Natural killer cell (primary cell): ENCODE measurements at regions of chr14 and their contacts with region 1.

Region 1: DNA sequence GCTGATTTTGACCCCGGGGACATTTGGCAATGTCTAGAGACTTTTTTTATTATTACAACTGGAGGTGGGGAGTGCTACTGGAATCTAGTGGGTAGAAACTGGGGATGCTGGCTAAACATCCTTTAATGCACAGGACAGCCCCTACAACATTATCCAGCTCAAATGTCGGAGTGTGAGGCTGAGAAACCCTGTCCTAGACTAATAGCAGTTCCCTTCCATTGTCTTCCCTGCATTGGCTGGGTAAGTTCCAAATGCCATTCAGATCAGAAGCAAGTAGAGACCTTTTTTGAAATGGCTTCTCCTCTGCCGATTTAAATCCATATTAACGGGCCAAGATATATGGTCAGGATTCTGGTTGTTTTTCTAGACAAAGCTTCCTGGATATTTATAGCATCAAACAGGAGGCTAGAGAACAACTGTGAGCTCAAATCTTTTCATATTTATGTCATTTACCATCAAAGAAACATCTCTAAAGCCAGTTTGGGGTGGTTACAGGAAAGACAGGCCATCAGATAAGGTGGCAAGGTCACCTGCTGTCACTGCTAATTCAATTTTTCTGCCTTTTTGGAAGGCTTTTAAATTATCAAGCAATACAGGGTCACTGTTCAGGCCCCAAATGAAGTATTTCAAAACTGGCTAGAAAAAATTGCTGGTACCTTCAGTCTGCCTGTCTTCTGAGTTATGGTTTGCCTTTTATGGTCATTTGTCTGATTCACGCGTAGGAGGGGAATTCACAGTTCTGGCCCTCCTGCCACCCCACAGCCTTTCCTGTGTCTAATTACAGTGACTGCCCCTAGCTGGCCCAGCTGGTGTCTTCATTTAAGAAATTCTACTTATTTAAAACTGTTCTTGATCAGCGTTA is 20.1 kb upstream of the AKAP5 start:
- DNase-seq: peak; percentile 55 to 76
- ATAC-seq: peak; percentile 90 to 96 (median 95)
- H3K4me3 ChIP-seq: no peak overlapping the region
- H3K4me3 Mint-ChIP-seq: peak overlapping the region; percentile 58
- H3K27ac ChIP-seq: peak overlapping the region; percentile 93
- H3K27ac Mint-ChIP-seq: peak overlapping the region; percentile 89 to 99
- H3K4me1 ChIP-seq: peaks cover 60% of the 10 kb centered on the region
- H3K4me1 Mint-ChIP-seq: peaks cover 53 to 54% of the 10 kb centered on the region in 2 donors
- H3K27me3 ChIP-seq: no peaks in the 10 kb centered on the region
- H3K27me3 Mint-ChIP-seq: no peaks in the 10 kb centered on the region
- CTCF ChIP-seq: no peak

Region 2: DNA sequence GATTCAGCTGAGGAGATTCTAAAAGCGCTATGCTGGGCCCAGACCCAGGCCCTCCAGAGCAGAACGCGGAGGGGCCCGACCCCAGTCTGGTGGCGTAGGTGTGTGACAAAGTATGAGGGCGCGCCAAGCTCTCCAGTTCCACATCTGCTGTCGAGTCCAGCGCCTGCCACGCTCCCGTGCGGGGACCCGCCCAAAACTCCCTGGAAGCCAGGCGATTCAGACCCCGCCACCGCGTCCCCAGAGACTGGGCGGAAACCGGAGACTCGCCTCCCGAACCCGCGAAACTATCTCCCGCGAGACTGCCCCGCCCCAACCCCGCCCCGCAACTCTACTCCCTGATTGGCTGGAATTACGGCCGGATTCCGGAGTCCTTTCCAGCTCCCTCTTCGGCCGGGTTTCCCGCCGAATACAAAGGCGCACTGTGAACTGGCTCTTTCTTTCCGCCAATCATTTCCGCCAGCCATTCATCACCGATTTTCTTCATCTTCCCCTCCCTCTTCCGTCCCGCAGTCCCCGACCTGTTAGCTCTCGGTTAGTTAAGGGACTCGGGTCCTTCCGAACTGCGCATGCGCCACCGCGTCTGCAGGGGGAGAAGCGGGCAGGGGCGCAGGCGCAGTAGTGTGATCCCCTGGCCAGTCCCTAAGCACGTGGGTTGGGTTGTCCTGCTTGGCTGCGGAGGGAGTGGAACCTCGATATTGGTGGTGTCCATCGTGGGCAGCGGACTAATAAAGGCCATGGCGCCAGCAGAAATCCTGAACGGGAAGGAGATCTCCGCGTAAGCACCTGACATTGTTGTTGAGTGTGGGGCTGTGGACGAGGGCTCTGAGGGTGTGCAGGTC is 57.3 kb before region 1 on chr14 and contains the start of gene MTHFD1:
- intact Hi-C with region 1: loop called (anchors 5 kb)
- DNase-seq: peak; percentile 92 to 99
- ATAC-seq: peak; percentile 86 to 90 (median 88)
- H3K4me3 ChIP-seq: peak within 1 kb of the TSS; percentile 87
- H3K4me3 Mint-ChIP-seq: peak within 1 kb of the TSS; percentile 99
- H3K27ac ChIP-seq: peak within 1 kb of the TSS; percentile 63
- H3K27ac Mint-ChIP-seq: peak within 1 kb of the TSS; percentile 90 to 97
- H3K4me1 ChIP-seq: peaks cover 22% of the 10 kb centered on the region
- H3K4me1 Mint-ChIP-seq: peaks cover 20 to 28% of the 10 kb centered on the region in 2 donors
- H3K27me3 ChIP-seq: no peaks in the 10 kb centered on the region
- H3K27me3 Mint-ChIP-seq: no peaks in the 10 kb centered on the region
- CTCF ChIP-seq: no peak
- total RNA-seq, gene MTHFD1: 27.6 to 34.6 (median 28.0) TPM